Naive thymus-derived CD8-positive, alpha-beta T cell (primary cell): ENCODE measurements at regions of chr21 and their contacts with region 1.

Region 1: DNA sequence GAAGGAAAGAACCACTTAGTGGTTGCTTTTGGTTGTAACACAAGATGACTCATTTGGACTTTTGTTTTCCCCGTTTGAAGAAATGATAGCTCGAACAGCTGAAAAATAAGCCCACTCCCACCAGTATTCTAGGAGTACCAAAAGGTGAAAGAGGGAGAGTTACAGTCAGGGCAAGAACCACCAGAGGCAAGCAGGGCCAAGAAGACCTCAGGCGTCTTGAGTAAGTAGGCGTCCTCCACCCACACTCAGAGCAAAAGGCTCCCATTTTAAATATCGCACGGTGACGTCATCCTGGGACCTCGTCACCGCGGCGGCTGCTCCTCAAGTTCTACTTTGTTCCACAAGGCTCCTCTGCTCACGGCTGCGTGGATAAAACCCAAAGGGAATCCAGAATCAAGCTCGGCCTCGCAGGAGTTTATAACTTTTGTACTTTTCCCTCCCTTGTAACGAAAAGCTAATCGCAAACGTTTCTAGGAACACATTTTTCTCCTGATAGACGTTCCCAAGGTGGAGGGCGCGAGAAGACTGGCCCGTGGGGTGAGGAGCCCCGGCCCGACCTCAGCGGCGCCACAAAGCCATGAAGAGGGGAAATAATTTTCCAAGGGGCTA is 1.2 kb downstream of the BTG3 start:
- DNase-seq: peak; percentile 52 to 86 (median 75)
- ATAC-seq: peak; percentile 60 to 76
- H3K4me3 Mint-ChIP-seq: peak overlapping the region; percentile 82 to 99 (median 92)
- H3K27ac Mint-ChIP-seq: peak overlapping the region; percentile 86 to 98 (median 94)
- H3K4me1 Mint-ChIP-seq: peaks cover 5 to 29% (median 16%) of the 10 kb centered on the region in 4 donors
- H3K27me3 Mint-ChIP-seq: no peaks in the 10 kb centered on the region

Region 2: GRCh38 chr21:15740383-15740782 is 1871.1 kb before region 1 on chr21:
- POLR2A ChIA-PET with region 1: interaction called, 11 read pairs
- DNase-seq: no peak
- ATAC-seq: no peak
- H3K4me3 Mint-ChIP-seq: peak overlapping the region in 8 of 10 donors; percentile 9 to 77 (median 42)
- H3K27ac Mint-ChIP-seq: peak overlapping the region in 7 of 10 donors; percentile 10 to 83 (median 52)
- H3K4me1 Mint-ChIP-seq: peaks cover 40 to 92% (median 88%) of the 10 kb centered on the region in 4 donors
- H3K27me3 Mint-ChIP-seq: no peaks in the 10 kb centered on the region

Region 3: GRCh38 chr21:17578162-17578561 is 33.4 kb before region 1 on chr21:
- POLR2A ChIA-PET with region 1: no interaction called
- DNase-seq: no peak
- ATAC-seq: no peak
- H3K4me3 Mint-ChIP-seq: no peak overlapping the region
- H3K27ac Mint-ChIP-seq: no peak overlapping the region
- H3K4me1 Mint-ChIP-seq: peaks cover 0 to 2% (median 0%) of the 10 kb centered on the region in 4 donors
- H3K27me3 Mint-ChIP-seq: peaks cover 0 to 8% (median under 1%) of the 10 kb centered on the region in 5 donors